Endothelial cell of umbilical vein (primary cell): ENCODE measurements at regions of chr16 and their contacts with region 1.

Region 1: GRCh38 chr16:69157196-69157595 is 24.7 kb downstream of the UTP4 start:
- DNase-seq: no peak
- H3K4me3 ChIP-seq: no peak overlapping the region
- H3K27ac ChIP-seq: no peak overlapping the region
- H3K4me1 ChIP-seq: no peaks in the 10 kb centered on the region
- H3K27me3 ChIP-seq: no peaks in the 10 kb centered on the region
- CTCF ChIP-seq: no peak
- POLR2A ChIP-seq: no peak

Region 2: DNA sequence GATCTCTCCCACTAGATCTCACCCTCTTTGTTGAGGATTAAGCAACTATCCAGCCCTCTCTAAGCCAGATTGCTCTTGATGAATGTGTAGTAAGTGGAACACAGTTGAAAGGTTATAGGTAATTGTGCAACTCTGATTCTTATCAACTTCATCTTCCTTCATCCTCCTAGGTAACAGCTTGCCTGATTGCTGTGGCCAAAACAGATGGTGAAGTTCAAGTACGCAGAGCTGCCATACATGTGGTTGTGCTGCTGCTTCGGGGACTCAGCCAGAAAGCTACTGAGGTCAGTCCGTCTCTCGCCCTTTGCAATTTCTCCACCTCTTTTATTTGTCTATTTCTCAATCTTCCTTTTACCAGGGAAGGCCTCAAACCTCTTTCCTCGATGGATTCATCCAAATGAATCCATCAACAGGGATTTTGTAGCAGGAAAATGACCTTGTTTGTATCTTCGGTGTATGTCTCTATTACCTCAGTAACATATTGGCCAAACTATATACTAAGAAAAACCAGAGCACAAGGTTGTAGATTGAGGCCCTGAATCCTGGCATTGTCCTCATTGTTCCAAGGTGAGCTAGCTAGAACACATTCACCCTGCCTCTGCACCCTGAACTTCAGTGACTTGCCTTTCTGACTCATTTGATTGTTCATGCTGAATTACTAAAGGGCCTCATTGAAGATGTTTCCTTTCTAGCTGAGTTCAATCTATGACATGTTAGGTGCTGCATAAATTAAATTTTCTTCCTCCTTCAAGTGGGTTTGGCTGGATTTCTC is 116.9 kb before region 1 on chr16:
- CTCF ChIA-PET with region 1: no interaction called
- POLR2A ChIA-PET with region 1: no interaction called
- dilution Hi-C with region 1: no loop called
- intact Hi-C with region 1: no loop called
- DNase-seq: peak; percentile 80
- H3K4me3 ChIP-seq: no peak overlapping the region
- H3K27ac ChIP-seq: peak overlapping the region; percentile 87
- H3K4me1 ChIP-seq: peaks cover 21% of the 10 kb centered on the region
- H3K27me3 ChIP-seq: no peaks in the 10 kb centered on the region
- CTCF ChIP-seq: no peak
- POLR2A ChIP-seq: no peak

Region 3: DNA sequence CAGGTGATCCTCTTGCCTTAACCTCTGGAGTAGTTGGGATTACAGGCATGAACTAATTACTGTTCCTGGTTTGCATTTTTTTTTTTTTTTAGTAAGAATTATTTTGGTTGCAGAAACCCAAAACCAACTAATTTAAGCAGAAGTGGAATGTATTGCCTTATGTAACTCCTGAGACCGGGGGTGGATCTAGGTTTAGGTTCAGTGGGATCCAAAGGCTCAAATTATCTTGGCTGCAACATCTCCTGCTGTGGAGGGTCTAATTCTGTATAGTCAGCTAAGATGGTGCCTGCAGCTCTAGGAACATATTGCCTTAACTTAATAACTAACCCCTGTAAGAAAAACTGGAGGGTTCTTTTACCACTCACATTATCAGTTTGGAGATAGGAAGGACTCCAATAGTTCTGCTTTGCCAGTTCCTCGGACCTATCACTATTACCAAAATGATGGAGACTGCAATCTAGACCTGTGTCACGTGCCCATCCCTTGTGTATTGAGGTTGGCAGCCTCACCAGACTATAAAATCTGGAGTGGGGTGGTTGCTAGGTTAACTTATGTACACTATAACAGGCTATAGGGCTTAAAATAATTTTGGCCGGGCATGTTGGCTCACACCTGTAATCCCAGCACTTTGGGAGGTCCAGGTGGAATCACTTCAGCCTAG is 38.3 kb after region 1 on chr16:
- CTCF ChIA-PET with region 1: no interaction called
- POLR2A ChIA-PET with region 1: no interaction called
- dilution Hi-C with region 1: no loop called
- intact Hi-C with region 1: no loop called
- DNase-seq: no peak
- H3K4me3 ChIP-seq: no peak overlapping the region
- H3K27ac ChIP-seq: no peak overlapping the region
- H3K4me1 ChIP-seq: peaks cover 10% of the 10 kb centered on the region
- H3K27me3 ChIP-seq: no peaks in the 10 kb centered on the region
- CTCF ChIP-seq: no peak
- POLR2A ChIP-seq: no peak

Region 4: DNA sequence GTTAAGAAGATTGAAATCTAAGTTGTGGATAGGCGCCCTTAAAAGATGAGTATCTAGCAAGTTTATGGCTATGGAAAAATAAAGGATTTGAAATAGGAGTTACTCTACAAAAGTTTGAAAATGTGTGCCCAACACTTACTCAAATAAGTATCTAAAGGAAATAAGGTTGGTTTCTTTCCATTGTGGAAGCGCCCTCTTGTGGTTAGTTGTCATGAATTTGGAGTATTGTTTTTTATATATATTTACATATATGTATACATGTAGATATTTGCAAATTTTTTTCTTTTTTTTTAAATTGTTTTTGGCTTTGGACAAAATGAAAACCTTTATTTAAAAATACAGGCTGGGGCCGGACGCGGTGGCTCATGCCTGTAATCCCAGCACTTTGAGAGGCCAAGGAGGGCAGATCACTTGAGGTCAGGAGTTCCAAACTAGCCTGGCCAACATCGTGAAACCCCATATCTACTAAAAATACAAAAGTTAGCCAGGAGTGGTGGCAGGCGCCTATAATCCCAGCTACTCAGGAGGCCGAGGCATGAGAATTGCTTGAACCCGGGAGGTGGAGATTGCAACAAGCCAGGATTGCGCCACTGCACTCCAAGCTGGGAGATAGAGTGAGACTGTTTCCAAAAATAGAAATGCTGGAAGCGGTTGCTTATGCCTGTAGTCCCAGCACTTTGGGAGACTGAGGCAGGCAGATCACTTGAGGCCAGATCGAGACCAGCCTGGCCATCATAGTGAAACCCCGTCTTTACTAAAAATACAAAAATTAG is 129.9 kb after region 1 on chr16:
- CTCF ChIA-PET with region 1: interaction called, 119 read pairs
- POLR2A ChIA-PET with region 1: no interaction called
- dilution Hi-C with region 1: no loop called
- intact Hi-C with region 1: no loop called
- DNase-seq: peak; percentile 84
- H3K4me3 ChIP-seq: no peak overlapping the region
- H3K27ac ChIP-seq: no peak overlapping the region
- H3K4me1 ChIP-seq: peaks cover 8% of the 10 kb centered on the region
- H3K27me3 ChIP-seq: no peaks in the 10 kb centered on the region
- CTCF ChIP-seq: peak; percentile 14 to 22
- POLR2A ChIP-seq: no peak